Prostate gland (tissue), 2 donors: ENCODE measurements at regions of chr15 and their contacts with region 1.

Region 1: GRCh38 chr15:70488002-70488605 is 275.3 kb downstream of the UACA start:
- DNase-seq: peak; percentile 64
- H3K4me3 ChIP-seq: no peak overlapping the region
- H3K27ac ChIP-seq: no peak overlapping the region
- H3K4me1 ChIP-seq: no peaks in the 10 kb centered on the region
- H3K27me3 ChIP-seq: no peaks in the 10 kb centered on the region
- CTCF ChIP-seq: peak; percentile 88 to 97 (median 93)
- POLR2A ChIP-seq: no peak

Region 2: GRCh38 chr15:69475769-69476358 is 1012.2 kb before region 1 on chr15:
- intact Hi-C with region 1: loop called (anchors 5 kb)
- DNase-seq: peak; percentile 78
- H3K4me3 ChIP-seq: no peak overlapping the region
- H3K27ac ChIP-seq: no peak overlapping the region
- H3K4me1 ChIP-seq: no peaks in the 10 kb centered on the region
- H3K27me3 ChIP-seq: no peaks in the 10 kb centered on the region
- CTCF ChIP-seq: peak; percentile 66 to 98 (median 94)
- POLR2A ChIP-seq: no peak

Region 3: DNA sequence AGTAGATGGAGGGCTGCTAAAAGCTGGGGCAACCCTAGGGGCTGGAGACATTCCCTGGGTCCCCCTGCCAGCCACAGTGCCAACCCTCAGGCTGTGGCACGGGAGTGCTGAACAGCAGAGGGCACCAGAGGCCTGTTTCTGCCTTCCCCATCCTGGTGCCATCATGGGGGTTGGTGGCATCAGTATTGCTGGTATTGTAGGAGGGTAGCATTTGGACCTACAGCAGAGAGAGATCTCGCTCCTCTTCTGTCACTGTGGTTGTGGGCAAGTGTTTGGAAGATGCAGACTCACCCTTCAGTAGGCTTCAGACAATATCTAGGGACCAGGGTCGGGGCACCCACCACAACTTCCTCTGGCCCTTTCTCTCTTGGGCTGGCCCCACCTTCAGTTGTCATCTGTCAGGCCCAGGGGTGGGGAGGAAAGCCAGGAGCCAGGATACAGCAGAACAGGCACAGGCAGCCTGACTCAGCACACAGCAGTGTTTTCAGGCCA is 912.0 kb before region 1 on chr15:
- intact Hi-C with region 1: loop called (anchors 5 kb)
- DNase-seq: peak; percentile 53
- H3K4me3 ChIP-seq: no peak overlapping the region
- H3K27ac ChIP-seq: no peak overlapping the region
- H3K4me1 ChIP-seq: peaks cover 5% of the 10 kb centered on the region
- H3K27me3 ChIP-seq: no peaks in the 10 kb centered on the region
- CTCF ChIP-seq: peak; percentile 57 to 92 (median 79)
- POLR2A ChIP-seq: no peak

Region 4: DNA sequence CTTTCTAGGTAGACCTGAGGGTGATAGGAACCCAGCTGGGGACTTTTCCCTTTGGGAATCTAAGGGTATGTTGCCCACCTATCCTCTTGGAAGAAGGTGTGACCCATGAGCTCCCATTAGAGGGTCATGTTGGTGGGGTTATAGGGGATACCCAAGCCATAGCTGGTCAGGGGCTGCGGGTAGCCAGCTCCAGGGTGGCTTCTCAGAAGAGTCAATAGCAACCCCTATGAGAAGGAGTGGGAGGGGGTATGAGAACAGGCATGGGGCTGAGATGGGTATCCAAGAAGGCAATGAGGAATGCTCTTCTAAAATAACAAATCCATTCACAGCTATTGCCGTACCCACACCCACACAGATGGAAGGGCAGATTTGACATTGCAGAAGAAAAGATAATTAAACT is 57.4 kb after region 1 on chr15:
- intact Hi-C with region 1: no loop called
- DNase-seq: no peak
- H3K4me3 ChIP-seq: no peak overlapping the region
- H3K27ac ChIP-seq: no peak overlapping the region
- H3K4me1 ChIP-seq: no peaks in the 10 kb centered on the region
- H3K27me3 ChIP-seq: no peaks in the 10 kb centered on the region
- CTCF ChIP-seq: no peak
- POLR2A ChIP-seq: no peak